Activated CD4-positive, alpha-beta memory T cell treated with anti-CD3 and anti-CD28 coated beads for 36 hours (primary cell): ENCODE measurements at regions of chr7 and their contacts with region 1.

Region 1: GRCh38 chr7:127392566-127393367 is at the start of gene ZNF800:
- DNase-seq: peak; percentile 93
- H3K4me3 Mint-ChIP-seq: peak within 1 kb of the TSS; percentile 92
- H3K27ac Mint-ChIP-seq: peak within 1 kb of the TSS; percentile 94
- H3K4me1 Mint-ChIP-seq: peaks cover 59% of the 10 kb centered on the region
- H3K27me3 Mint-ChIP-seq: no peaks in the 10 kb centered on the region
- total RNA-seq, gene ZNF800: 24.9 to 29.2 TPM

Region 2: GRCh38 chr7:127189886-127190285 is 202.9 kb before region 1 on chr7:
- CTCF ChIA-PET with region 1: no interaction called
- POLR2A ChIA-PET with region 1: no interaction called
- intact Hi-C with region 1: no loop called
- DNase-seq: no peak
- H3K4me3 Mint-ChIP-seq: no peak overlapping the region
- H3K27ac Mint-ChIP-seq: no peak overlapping the region
- H3K4me1 Mint-ChIP-seq: peaks cover 6% of the 10 kb centered on the region
- H3K27me3 Mint-ChIP-seq: peaks cover 10% of the 10 kb centered on the region

Region 3: GRCh38 chr7:127253281-127254162 is 139.2 kb before region 1 on chr7:
- CTCF ChIA-PET with region 1: interaction called, 3 read pairs
- POLR2A ChIA-PET with region 1: no interaction called
- intact Hi-C with region 1: loop called (anchors 5 kb)
- DNase-seq: peak; percentile 69
- H3K4me3 Mint-ChIP-seq: peak overlapping the region; percentile 70
- H3K27ac Mint-ChIP-seq: no peak overlapping the region
- H3K4me1 Mint-ChIP-seq: peaks cover 13% of the 10 kb centered on the region
- H3K27me3 Mint-ChIP-seq: peaks cover 51% of the 10 kb centered on the region

Region 4: DNA sequence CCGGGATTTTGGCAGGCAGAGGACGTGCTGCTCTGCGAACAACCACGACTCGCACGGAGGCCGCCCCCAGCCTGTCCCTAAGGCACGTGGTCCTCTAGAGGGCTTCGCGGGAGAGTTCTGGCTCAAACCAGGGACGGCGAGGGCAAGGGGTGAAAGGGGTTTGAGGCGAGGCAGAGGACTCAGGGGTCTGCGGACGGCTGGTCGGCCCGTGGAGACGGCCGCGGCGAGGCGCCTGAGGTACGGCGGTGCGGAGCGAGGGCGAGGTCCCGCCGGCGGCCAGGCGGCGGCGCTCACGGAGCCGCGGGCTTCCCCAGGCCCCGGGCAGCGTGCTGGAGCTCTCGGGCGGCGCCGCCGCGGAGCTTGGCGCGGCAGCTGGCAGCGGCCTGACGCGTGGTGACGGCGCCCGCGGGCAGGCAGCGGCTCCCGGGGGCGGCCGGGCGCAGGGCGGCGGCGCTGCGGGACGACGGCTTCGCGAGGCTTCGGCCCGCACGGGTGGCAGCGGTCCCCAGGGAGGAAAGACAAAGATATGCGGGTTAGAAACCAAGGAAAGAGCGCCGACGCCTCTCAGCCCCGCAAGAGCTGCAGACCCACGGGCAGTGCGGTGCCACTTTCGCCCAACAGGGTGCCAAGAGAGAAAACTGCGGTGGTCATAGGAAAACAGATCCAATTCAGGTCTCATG is 45.1 kb before region 1 on chr7:
- CTCF ChIA-PET with region 1: interaction called, 29 read pairs
- POLR2A ChIA-PET with region 1: interaction called, 15 read pairs
- intact Hi-C with region 1: loop called (anchors 1 kb)
- DNase-seq: peak; percentile 81
- H3K4me3 Mint-ChIP-seq: peak overlapping the region; percentile 43
- H3K27ac Mint-ChIP-seq: no peak overlapping the region
- H3K4me1 Mint-ChIP-seq: peaks cover 22% of the 10 kb centered on the region
- H3K27me3 Mint-ChIP-seq: no peaks in the 10 kb centered on the region

Region 5: DNA sequence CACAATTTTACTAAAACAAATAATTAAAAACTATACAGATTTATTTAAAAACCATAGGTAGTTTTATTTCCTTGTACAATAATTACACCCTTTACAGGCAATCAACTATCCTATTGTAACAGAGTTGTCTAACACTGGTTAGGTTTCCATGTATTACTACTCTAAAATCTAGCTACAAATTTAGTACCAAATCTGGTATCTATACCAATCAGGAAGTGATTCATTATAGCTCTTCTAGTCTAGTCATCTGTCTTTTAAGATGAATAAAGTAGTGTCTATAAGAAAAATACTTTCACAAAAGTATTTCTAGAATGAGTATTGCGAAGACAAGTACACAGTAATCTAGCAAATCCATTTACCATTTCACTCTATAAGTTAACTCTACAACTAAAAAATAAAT is 17.1 kb before region 1 on chr7:
- CTCF ChIA-PET with region 1: interaction called, 3 read pairs
- POLR2A ChIA-PET with region 1: interaction called, 15 read pairs
- intact Hi-C with region 1: loop called (anchors 1 kb)
- DNase-seq: no peak
- H3K4me3 Mint-ChIP-seq: no peak overlapping the region
- H3K27ac Mint-ChIP-seq: no peak overlapping the region
- H3K4me1 Mint-ChIP-seq: peaks cover 56% of the 10 kb centered on the region
- H3K27me3 Mint-ChIP-seq: no peaks in the 10 kb centered on the region

Region 6: GRCh38 chr7:127413962-127414361 is 21.2 kb after region 1 on chr7:
- CTCF ChIA-PET with region 1: no interaction called
- POLR2A ChIA-PET with region 1: interaction called, 6 read pairs
- intact Hi-C with region 1: loop called (anchors 2 kb)
- DNase-seq: no peak
- H3K4me3 Mint-ChIP-seq: no peak overlapping the region
- H3K27ac Mint-ChIP-seq: no peak overlapping the region
- H3K4me1 Mint-ChIP-seq: peaks cover 35% of the 10 kb centered on the region
- H3K27me3 Mint-ChIP-seq: no peaks in the 10 kb centered on the region

Region 7: DNA sequence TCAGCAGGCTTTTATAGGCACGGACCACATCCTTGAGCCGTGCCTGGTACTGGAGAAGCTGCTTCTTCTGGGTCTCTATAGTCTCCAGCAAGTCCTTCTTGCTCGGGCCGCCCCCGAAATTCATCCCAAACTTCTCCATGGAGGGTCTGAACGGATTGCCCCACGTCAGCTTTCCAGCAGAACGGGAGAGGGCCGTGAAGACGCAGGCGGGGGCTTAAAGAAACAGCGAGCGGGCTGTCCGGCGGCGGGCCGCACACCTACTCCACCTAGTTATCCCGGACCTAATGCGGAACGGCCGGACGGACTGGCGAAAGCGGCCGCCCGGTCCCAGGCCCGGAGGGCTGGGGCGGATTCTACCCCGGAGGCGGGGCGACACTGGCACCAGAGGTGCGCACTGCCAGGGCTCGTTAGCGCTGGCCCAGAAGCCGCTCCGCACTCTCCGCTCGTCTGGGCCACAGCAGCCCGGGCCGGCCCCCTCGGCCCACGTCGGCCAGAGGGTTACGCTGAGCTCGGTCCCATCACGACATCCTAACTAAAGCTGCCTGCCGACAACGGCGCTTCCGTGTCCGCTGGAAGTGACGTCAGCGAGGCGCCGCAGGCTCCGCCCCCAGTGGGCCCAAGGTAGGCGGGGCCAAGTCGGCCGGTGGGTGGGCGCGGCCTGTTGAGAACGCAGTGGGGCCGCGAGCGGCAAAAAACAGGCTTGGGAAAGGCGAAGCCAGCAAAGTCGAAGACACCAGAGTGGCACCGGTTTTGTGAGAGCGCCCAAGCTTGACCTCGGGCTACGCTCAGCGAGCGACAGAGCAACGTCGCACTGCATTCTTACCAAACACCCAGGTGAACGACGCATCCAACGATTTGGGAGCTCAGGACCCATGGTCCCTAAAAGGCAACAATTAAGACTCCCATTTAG is 192.5 kb after region 1 on chr7 and contains the start of gene GCC1:
- CTCF ChIA-PET with region 1: no interaction called
- POLR2A ChIA-PET with region 1: interaction called, 8 read pairs
- intact Hi-C with region 1: loop called (anchors 2 kb)
- DNase-seq: peak; percentile 96
- H3K4me3 Mint-ChIP-seq: peak within 1 kb of the TSS; percentile 88
- H3K27ac Mint-ChIP-seq: peak within 1 kb of the TSS; percentile 64
- H3K4me1 Mint-ChIP-seq: peaks cover 69% of the 10 kb centered on the region
- H3K27me3 Mint-ChIP-seq: no peaks in the 10 kb centered on the region
- total RNA-seq, gene GCC1: 14.1 to 15.0 TPM

Region 8: GRCh38 chr7:127609297-127609696 is 216.5 kb after region 1 on chr7:
- CTCF ChIA-PET with region 1: no interaction called
- POLR2A ChIA-PET with region 1: no interaction called
- intact Hi-C with region 1: no loop called
- DNase-seq: no peak
- H3K4me3 Mint-ChIP-seq: no peak overlapping the region
- H3K27ac Mint-ChIP-seq: no peak overlapping the region
- H3K4me1 Mint-ChIP-seq: no peaks in the 10 kb centered on the region
- H3K27me3 Mint-ChIP-seq: peaks cover 17% of the 10 kb centered on the region

Region 9: DNA sequence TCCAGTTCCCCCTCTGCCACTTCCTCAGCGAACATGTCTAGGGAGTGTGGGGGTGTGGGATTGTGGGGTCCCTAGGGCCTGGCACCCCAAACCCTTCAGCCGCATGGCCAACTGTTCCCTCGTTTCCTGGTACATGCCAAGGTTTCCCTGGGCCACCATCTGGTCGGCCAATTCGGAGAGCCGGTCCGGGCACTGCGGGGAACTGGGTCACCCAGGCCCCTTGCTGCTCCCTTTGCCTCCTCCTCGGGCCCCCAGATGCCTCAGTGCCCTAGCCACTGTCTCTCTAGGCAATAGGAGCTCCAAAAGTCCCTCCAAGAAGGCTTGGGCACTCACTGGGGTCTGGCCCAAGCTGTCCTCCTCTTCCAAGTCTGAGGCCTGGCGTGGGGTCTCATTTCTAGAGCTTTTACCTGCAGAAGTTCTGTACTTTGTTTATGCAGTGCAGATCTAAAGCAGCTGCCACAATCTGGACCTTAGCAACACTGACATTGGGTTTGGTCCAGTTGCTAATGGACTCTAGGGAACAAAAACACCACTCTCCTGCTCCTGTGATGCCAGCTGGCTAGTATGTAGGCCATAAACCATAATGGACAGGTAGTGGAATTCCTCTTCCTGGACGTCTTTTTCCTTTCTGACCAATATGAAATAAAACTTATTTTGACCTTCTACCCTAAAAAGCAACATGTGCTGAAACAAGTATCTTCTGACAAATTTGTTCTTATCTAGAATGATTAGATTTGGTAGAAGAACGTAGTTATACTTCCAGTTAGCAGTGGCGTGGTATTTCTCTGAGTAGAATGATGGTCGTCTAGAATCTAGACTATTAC is 465.5 kb after region 1 on chr7:
- CTCF ChIA-PET with region 1: no interaction called
- POLR2A ChIA-PET with region 1: no interaction called
- intact Hi-C with region 1: loop called (anchors 10 kb)
- DNase-seq: no peak
- H3K4me3 Mint-ChIP-seq: no peak overlapping the region
- H3K27ac Mint-ChIP-seq: peak overlapping the region; percentile 23
- H3K4me1 Mint-ChIP-seq: peaks cover 60% of the 10 kb centered on the region
- H3K27me3 Mint-ChIP-seq: no peaks in the 10 kb centered on the region